Esophagus muscularis mucosa (tissue), 4 donors: ENCODE measurements at regions of chr10 and their contacts with region 1.

Region 1: DNA sequence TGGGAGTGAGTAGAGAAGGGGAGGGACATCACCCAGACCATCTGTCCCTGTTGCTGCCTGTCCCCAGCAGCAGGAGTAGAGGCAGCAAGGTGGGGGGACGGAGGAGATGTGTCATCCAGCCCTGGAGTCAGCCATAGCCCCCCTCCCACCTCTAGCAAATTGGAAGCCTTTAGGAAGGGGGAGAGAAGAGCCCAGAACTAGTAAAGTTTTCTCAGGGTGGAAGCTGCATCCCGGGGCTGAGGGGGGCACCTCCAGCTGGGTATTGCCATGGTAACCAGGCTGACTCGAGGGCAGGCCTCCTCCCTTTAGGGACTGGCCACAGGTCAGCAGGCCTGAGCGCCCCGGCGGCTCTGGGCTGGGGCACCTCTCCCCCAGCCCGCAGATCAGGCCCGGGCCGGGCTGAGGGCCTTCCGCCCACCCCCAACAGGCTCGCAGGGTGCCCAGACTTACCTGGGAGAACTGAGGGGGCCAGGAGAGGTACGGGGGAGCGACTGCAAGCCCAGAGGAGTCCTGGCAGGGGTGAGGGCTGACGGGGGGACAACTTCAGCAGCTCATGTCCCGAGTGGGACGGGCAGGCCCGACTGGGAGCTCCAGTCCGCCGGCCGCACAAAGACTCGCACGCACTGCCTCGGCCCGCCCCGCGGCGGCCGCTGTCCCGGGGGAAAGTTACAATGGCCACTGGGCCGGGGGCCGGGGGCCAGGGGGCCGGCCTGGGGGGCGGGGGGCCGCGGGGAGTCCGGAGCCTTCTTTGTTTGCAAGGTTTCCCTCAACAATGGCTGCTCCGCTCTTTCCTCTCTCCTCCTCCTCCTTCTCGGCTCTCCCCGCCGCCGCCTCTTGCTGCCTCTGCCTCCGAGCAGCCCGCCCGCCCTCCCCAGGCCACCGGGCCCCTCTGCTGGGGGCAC is 6.0 kb downstream of the LDB1 start:
- DNase-seq: no peak
- H3K4me3 ChIP-seq: peak overlapping the region; percentile 59 to 99 (median 82)
- H3K27ac ChIP-seq: peak overlapping the region; percentile 99
- H3K4me1 ChIP-seq: peaks cover 62 to 79% (median 73%) of the 10 kb centered on the region in 4 donors
- H3K27me3 ChIP-seq: no peaks in the 10 kb centered on the region
- CTCF ChIP-seq: no peak
- EP300 ChIP-seq: no peak
- POLR2A ChIP-seq: no peak

Region 2: DNA sequence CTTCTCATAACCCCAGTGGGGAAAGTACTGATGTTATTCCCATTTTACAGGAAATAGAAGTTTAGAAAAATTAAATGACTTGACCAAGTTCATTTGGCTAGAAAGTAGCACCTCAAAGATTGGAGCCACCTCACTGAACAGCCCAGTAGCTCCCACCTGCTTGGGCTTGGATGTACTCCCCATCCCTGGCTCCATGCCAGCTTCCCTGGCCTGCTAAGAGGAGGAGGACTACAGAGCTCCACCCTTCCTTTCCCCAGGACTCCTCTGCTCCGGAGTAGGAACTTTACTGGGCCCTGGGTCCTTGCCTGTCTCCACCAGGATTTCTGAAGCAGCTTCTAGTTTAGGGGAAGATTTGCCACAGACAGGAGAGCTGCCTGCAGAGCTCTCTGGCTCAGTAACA is 46.0 kb before region 1 on chr10:
- intact Hi-C with region 1: loop called (anchors 2 kb)
- DNase-seq: no peak
- H3K4me3 ChIP-seq: no peak overlapping the region
- H3K27ac ChIP-seq: no peak overlapping the region
- H3K4me1 ChIP-seq: peaks cover 32 to 51% (median 43%) of the 10 kb centered on the region in 4 donors
- H3K27me3 ChIP-seq: no peaks in the 10 kb centered on the region
- CTCF ChIP-seq: no peak
- EP300 ChIP-seq: no peak
- POLR2A ChIP-seq: no peak